B cell (primary cell): ENCODE measurements at regions of chr6 and their contacts with region 1.

Region 1: DNA sequence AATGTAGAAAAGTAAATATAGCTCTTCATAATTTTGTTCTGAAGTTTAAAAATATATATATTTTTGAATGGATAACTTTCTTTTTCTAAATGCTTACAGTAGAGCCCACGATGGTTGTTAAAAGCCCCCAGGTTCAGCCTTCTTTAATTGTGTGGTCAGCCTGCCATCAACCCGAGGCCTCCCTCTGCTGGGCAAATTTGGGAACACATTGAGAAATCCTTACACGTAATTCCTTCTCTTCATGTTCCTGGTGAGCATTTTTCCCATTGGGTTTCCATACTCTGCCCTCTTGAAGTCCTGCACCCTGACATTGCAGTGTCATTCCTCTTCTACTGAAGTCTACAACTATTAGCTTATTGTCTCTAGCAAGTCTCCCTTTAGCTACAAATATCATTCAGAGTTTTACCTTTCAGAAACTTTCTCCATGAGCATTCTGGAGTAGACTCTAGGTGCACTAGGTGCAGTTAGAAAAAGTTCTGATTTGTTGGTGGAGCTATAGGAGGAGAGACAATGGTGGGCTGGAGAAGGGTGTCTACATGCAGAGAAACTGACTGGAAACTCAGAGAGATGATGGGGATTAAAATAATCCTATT is 40.6 kb downstream of the TRIM38 start:
- DNase-seq: peak; percentile 69
- ATAC-seq: peak; percentile 63
- H3K4me3 ChIP-seq: no peak overlapping the region
- H3K4me3 Mint-ChIP-seq: no peak overlapping the region
- H3K27ac ChIP-seq: no peak overlapping the region
- H3K27ac Mint-ChIP-seq: no peak overlapping the region
- H3K4me1 ChIP-seq: no peaks in the 10 kb centered on the region
- H3K4me1 Mint-ChIP-seq: peaks cover 7% of the 10 kb centered on the region
- H3K27me3 ChIP-seq: no peaks in the 10 kb centered on the region
- H3K27me3 Mint-ChIP-seq: no peaks in the 10 kb centered on the region
- CTCF ChIP-seq: peak; percentile 91

Region 2: DNA sequence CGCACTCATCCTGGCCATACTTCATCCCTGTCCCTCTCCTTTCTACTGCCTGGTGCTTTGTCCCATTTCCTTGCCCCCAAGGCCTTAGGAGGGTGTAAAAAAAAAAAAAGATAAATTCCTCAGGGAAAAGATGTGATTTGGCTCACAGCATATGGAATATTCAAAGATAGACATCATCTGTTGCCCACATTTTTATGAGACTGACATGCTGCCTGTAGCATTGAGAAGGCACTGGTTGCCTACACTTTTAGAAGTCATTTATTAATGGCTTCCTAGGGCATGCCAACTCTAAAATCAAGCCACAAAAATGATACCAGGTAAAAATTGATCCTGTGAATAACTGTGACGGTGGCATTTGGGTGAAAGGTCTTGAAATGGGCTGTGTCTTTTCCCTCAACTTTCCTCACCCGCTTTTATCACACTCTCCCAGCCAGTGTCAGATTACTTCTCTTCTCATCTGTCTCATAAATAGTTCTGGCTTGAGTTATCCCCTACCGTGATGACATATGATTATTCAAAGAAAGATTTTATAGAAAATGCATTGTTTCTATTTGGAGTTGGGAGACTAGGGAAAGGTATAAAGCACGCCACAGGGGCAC is 584.6 kb before region 1 on chr6:
- CTCF ChIA-PET with region 1: no interaction called
- POLR2A ChIA-PET with region 1: no interaction called
- intact Hi-C with region 1: no loop called
- DNase-seq: no peak
- ATAC-seq: no peak
- H3K4me3 ChIP-seq: no peak overlapping the region
- H3K4me3 Mint-ChIP-seq: no peak overlapping the region
- H3K27ac ChIP-seq: no peak overlapping the region
- H3K27ac Mint-ChIP-seq: no peak overlapping the region
- H3K4me1 ChIP-seq: peaks cover 1 to 2% of the 10 kb centered on the region in 2 donors
- H3K4me1 Mint-ChIP-seq: peaks cover 11% of the 10 kb centered on the region
- H3K27me3 ChIP-seq: no peaks in the 10 kb centered on the region
- H3K27me3 Mint-ChIP-seq: no peaks in the 10 kb centered on the region
- CTCF ChIP-seq: no peak

Region 3: GRCh38 chr6:25617997-25618396 is 385.2 kb before region 1 on chr6:
- CTCF ChIA-PET with region 1: no interaction called
- POLR2A ChIA-PET with region 1: no interaction called
- intact Hi-C with region 1: loop called (anchors 5 kb)
- DNase-seq: peak; percentile 26
- ATAC-seq: no peak
- H3K4me3 ChIP-seq: no peak overlapping the region
- H3K4me3 Mint-ChIP-seq: no peak overlapping the region
- H3K27ac ChIP-seq: no peak overlapping the region
- H3K27ac Mint-ChIP-seq: no peak overlapping the region
- H3K4me1 ChIP-seq: peaks cover 5 to 6% of the 10 kb centered on the region in 2 donors
- H3K4me1 Mint-ChIP-seq: peaks cover 15% of the 10 kb centered on the region
- H3K27me3 ChIP-seq: no peaks in the 10 kb centered on the region
- H3K27me3 Mint-ChIP-seq: no peaks in the 10 kb centered on the region
- CTCF ChIP-seq: no peak

Region 4: DNA sequence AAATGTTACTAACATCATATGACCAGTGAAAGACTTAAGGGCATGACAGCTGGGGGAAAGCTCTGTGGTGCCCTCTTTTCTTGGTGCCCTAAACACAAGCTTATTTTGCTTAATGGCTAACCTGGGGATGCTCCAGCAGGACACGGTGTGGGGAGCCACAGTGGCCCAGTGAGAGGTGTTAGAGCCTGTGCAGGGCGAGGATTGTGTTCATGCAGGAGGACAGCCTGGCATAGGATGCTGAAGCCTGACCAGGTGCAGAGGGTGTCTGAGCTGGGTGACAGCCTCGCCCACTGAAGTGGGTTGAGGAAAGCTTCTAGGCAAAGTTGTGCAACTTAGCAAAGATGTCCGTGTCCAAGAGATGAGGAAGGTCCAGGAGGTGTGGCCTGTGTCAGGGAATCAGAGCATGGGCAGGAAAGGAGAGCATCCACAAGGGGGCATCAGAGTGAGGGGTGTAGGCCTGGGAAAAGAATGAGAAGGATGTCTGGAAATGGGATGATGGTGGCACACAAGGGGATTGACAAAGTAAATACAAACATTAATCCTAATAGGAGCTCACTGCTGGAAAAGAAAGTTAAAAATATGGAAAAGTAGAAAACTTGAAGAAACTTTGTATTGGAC is 214.8 kb before region 1 on chr6:
- CTCF ChIA-PET with region 1: interaction called, 63 read pairs
- POLR2A ChIA-PET with region 1: no interaction called
- intact Hi-C with region 1: no loop called
- DNase-seq: peak; percentile 57
- ATAC-seq: peak; percentile 49
- H3K4me3 ChIP-seq: no peak overlapping the region
- H3K4me3 Mint-ChIP-seq: no peak overlapping the region
- H3K27ac ChIP-seq: no peak overlapping the region
- H3K27ac Mint-ChIP-seq: no peak overlapping the region
- H3K4me1 ChIP-seq: no peaks in the 10 kb centered on the region
- H3K4me1 Mint-ChIP-seq: no peaks in the 10 kb centered on the region
- H3K27me3 ChIP-seq: no peaks in the 10 kb centered on the region
- H3K27me3 Mint-ChIP-seq: peaks cover 5% of the 10 kb centered on the region
- CTCF ChIP-seq: peak; percentile 60

Region 5: DNA sequence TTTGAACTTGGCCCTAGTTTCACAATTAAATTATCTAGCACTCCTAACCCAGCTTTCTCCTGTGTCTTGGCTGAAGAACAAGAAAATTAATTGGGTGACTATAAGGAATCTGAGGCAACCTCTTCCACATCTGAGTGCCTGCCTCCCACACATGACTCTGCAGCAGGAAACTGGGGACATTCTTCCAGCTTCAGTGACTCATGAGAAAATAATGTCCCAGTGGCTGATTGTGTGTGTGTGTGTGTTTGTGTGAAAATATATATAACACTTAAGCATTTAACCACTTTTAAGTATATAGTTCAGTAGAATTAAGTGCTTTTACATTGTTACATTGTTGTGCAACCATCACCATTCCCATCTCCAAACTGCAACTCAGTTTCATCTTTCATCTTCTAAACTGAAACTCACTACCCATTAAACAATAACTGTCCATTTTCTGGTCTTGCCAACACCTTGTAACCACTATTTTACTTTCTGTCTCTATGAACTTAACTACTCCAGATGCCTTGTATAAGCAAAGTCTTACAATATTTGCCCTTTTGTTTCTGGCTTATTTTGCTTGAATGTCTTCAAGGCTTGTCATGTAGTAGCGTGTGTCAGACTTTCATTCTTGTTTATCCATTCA is 31.9 kb before region 1 on chr6:
- CTCF ChIA-PET with region 1: interaction called, 23 read pairs
- POLR2A ChIA-PET with region 1: no interaction called
- intact Hi-C with region 1: no loop called
- DNase-seq: no peak
- ATAC-seq: no peak
- H3K4me3 ChIP-seq: no peak overlapping the region
- H3K4me3 Mint-ChIP-seq: no peak overlapping the region
- H3K27ac ChIP-seq: peak overlapping the region in 1 of 2 donors; percentile 29
- H3K27ac Mint-ChIP-seq: peak overlapping the region; percentile 63
- H3K4me1 ChIP-seq: peaks cover 32 to 52% of the 10 kb centered on the region in 2 donors
- H3K4me1 Mint-ChIP-seq: peaks cover 84% of the 10 kb centered on the region
- H3K27me3 ChIP-seq: no peaks in the 10 kb centered on the region
- H3K27me3 Mint-ChIP-seq: no peaks in the 10 kb centered on the region
- CTCF ChIP-seq: no peak

Region 6: DNA sequence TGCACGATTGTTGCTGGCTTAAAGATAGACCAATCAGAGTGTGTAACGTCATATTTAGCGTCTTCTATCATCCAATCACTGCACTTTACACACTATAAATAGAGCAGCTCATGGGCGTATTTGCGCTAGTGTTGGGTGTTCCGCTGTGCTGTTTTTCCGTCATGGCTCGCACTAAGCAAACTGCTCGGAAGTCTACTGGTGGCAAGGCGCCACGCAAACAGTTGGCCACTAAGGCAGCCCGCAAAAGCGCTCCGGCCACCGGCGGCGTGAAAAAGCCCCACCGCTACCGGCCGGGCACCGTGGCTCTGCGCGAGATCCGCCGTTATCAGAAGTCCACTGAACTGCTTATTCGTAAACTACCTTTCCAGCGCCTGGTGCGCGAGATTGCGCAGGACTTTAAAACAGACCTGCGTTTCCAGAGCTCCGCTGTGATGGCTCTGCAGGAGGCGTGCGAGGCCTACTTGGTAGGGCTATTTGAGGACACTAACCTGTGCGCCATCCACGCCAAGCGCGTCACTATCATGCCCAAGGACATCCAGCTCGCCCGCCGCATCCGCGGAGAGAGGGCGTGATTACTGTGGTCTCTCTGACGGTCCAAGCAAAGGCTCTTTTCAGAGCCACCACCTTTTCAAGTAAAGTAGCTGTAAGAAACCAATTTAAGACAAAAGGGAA is 17.3 kb after region 1 on chr6:
- CTCF ChIA-PET with region 1: interaction called, 71 read pairs
- POLR2A ChIA-PET with region 1: no interaction called
- intact Hi-C with region 1: no loop called
- DNase-seq: peak; percentile 95
- ATAC-seq: peak; percentile 53
- H3K4me3 ChIP-seq: peak overlapping the region; percentile 81 to 92 (median 88)
- H3K4me3 Mint-ChIP-seq: peak overlapping the region; percentile 99
- H3K27ac ChIP-seq: peak overlapping the region; percentile 94 to 99
- H3K27ac Mint-ChIP-seq: peak overlapping the region; percentile 100
- H3K4me1 ChIP-seq: peaks cover 9 to 24% of the 10 kb centered on the region in 2 donors
- H3K4me1 Mint-ChIP-seq: peaks cover 34% of the 10 kb centered on the region
- H3K27me3 ChIP-seq: no peaks in the 10 kb centered on the region
- H3K27me3 Mint-ChIP-seq: no peaks in the 10 kb centered on the region
- CTCF ChIP-seq: no peak

Region 7: GRCh38 chr6:26045065-26045927 is 42.1 kb after region 1 on chr6:
- CTCF ChIA-PET with region 1: no interaction called
- POLR2A ChIA-PET with region 1: no interaction called
- intact Hi-C with region 1: no loop called
- DNase-seq: peak; percentile 90
- ATAC-seq: peak; percentile 58
- H3K4me3 ChIP-seq: peak overlapping the region; percentile 56 to 98 (median 69)
- H3K4me3 Mint-ChIP-seq: peak overlapping the region; percentile 87
- H3K27ac ChIP-seq: peak overlapping the region; percentile 85 to 89
- H3K27ac Mint-ChIP-seq: peak overlapping the region; percentile 99
- H3K4me1 ChIP-seq: peaks cover 14 to 29% of the 10 kb centered on the region in 2 donors
- H3K4me1 Mint-ChIP-seq: peaks cover 17% of the 10 kb centered on the region
- H3K27me3 ChIP-seq: no peaks in the 10 kb centered on the region
- H3K27me3 Mint-ChIP-seq: no peaks in the 10 kb centered on the region
- CTCF ChIP-seq: no peak